ENCODE measurements at regions of chr10 and their contacts with region 1.

Region 1: GRCh38 chr10:18214691-18215563 is 74.7 kb downstream of the CACNB2 start:
- DNase-seq: peak; percentile 73
- ATAC-seq: peak; percentile 90
- H3K4me3 ChIP-seq: no peak overlapping the region
- H3K27ac ChIP-seq: no peak overlapping the region
- H3K4me1 ChIP-seq: peaks cover 3% of the 10 kb centered on the region
- H3K27me3 ChIP-seq: no peaks in the 10 kb centered on the region; the same call in 1 of the 2 replicates
- CTCF ChIP-seq: peak; percentile 90
- POLR2A ChIP-seq: no peak
- RAD21 ChIP-seq: peak; percentile 92

Region 2: DNA sequence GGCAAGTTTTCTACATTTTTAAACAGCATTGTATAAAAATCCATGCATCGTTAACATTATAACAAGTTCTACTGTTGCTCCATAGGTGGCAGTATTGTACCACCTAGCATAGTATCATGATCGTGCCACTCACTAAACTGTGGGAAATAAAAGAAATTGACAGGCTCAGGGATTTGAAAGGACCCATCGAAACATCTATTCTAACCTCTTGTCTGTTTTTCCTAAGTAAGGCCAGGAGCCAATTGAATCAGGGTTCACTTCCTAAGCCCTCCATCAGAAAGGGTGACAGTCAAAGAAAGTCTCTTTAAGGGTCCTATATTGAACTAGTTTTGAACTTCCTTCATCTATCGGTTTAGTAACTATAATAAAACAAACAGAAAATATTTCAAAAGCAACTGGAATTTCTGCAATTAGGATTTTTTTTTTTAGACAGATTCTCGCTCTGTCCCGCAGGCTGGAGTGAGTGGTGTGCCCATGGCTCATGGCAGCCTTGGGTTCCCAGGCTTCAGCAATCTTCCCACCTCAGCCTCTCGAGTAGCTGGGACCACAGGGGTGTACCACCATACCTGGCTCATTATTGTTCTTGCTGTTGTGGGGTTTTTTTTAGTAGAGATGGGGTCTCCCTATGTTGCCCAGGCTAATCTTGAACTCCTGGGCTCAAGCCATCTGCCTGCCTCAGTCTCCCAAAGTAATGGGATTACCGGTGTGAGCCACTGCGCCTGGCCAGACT is 607.2 kb before region 1 on chr10:
- CTCF ChIA-PET with region 1: no interaction called
- POLR2A ChIA-PET with region 1: no interaction called
- dilution Hi-C with region 1: no loop called
- in situ Hi-C with region 1: loop called (anchors 10 kb)
- intact Hi-C with region 1: loop called (anchors 1 kb)
- DNase-seq: peak; percentile 68
- ATAC-seq: peak; percentile 94
- H3K4me3 ChIP-seq: no peak overlapping the region
- H3K27ac ChIP-seq: no peak overlapping the region
- H3K4me1 ChIP-seq: no peaks in the 10 kb centered on the region
- H3K27me3 ChIP-seq: no peaks in the 10 kb centered on the region
- CTCF ChIP-seq: peak; percentile 97
- POLR2A ChIP-seq: no peak
- RAD21 ChIP-seq: peak; percentile 94

Region 3: DNA sequence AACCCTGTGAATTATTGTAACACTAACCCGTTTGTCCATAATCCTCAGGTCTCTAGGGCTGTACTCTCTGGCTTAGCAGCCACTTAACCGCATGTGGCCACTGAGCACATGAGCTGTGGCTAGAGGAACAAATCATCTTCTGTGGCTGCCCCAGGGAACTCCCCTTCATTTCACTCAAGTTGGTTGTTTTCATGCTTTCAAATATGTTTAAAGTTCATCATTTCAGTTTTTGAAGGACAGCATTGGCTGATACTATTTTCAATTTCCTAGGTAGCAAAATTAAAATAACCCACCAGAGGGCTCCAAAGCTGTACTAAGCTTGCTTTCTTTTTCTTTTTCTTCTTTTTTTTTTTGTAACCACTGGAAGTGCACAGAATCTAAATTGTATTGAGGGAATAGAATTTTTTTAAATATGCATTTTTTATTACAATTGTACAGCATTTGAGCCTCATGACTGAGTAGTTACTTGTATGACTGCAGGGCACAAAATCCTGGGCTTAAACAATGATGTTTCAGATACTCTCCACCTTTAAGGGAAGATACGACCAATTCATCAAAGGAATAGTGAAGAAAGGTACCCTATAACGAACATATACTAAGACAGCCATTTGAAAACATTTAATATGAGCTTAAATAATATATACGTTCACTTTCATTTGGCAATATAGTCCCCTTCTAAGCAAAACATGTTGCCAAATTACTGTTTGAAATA is 367.2 kb before region 1 on chr10:
- CTCF ChIA-PET with region 1: interaction called, 20 read pairs
- POLR2A ChIA-PET with region 1: no interaction called
- dilution Hi-C with region 1: no loop called
- in situ Hi-C with region 1: loop called (anchors 5 kb)
- intact Hi-C with region 1: loop called (anchors 1 kb)
- DNase-seq: peak; percentile 34
- ATAC-seq: peak; percentile 51
- H3K4me3 ChIP-seq: no peak overlapping the region
- H3K27ac ChIP-seq: no peak overlapping the region
- H3K4me1 ChIP-seq: no peaks in the 10 kb centered on the region
- H3K27me3 ChIP-seq: peaks cover 14% of the 10 kb centered on the region
- CTCF ChIP-seq: peak; percentile 64
- POLR2A ChIP-seq: no peak
- RAD21 ChIP-seq: peak; percentile 69

Region 4: DNA sequence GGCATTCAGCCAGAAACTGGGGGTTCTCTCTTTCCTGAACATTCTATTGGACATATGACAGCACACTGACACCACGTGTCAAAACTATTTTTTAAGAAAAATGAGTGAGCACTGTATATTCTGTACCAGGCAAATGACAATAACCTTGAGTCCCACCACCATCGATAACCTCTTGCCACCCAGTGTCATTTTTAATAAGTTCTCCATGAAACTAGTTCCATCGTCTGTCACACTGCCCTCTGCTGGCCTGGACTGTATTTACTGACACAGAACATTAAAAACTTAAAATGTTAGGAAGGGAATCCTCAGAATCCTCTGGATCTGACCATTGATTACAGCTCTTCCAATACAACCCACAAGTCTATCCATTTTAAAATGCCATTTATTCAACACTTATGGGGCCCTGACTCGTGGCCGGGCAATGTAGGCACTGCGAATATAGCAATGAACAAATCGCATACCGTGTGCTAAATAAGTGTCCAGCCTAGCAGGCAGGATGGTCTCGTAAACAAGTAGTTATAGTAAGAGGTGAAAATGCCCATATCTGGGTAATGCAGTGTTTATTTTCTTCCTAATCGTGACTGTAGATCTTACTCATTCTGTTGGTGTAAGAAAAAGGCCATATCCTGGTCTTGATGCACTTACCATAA is 110.6 kb before region 1 on chr10:
- CTCF ChIA-PET with region 1: interaction called, 5 read pairs
- POLR2A ChIA-PET with region 1: no interaction called
- dilution Hi-C with region 1: no loop called
- in situ Hi-C with region 1: no loop called
- intact Hi-C with region 1: loop called (anchors 1 kb)
- DNase-seq: peak; percentile 43
- ATAC-seq: peak; percentile 44; the same call in 1 of the 2 replicates
- H3K4me3 ChIP-seq: no peak overlapping the region
- H3K27ac ChIP-seq: no peak overlapping the region
- H3K4me1 ChIP-seq: no peaks in the 10 kb centered on the region
- H3K27me3 ChIP-seq: peaks cover 32% of the 10 kb centered on the region
- CTCF ChIP-seq: peak; percentile 64
- POLR2A ChIP-seq: no peak
- RAD21 ChIP-seq: peak; percentile 65

Region 5: GRCh38 chr10:18312374-18313139 is 97.6 kb after region 1 on chr10:
- CTCF ChIA-PET with region 1: interaction called, 4 read pairs
- POLR2A ChIA-PET with region 1: no interaction called
- dilution Hi-C with region 1: no loop called
- in situ Hi-C with region 1: no loop called
- intact Hi-C with region 1: loop called (anchors 1 kb)
- DNase-seq: peak; percentile 62
- ATAC-seq: peak; percentile 90
- H3K4me3 ChIP-seq: no peak overlapping the region
- H3K27ac ChIP-seq: no peak overlapping the region
- H3K4me1 ChIP-seq: no peaks in the 10 kb centered on the region
- H3K27me3 ChIP-seq: no peaks in the 10 kb centered on the region; the same call in 1 of the 2 replicates
- CTCF ChIP-seq: peak; percentile 51
- POLR2A ChIP-seq: no peak
- RAD21 ChIP-seq: peak; percentile 60